ENCODE measurements at regions of chr16 and their contacts with region 1.

Region 1: DNA sequence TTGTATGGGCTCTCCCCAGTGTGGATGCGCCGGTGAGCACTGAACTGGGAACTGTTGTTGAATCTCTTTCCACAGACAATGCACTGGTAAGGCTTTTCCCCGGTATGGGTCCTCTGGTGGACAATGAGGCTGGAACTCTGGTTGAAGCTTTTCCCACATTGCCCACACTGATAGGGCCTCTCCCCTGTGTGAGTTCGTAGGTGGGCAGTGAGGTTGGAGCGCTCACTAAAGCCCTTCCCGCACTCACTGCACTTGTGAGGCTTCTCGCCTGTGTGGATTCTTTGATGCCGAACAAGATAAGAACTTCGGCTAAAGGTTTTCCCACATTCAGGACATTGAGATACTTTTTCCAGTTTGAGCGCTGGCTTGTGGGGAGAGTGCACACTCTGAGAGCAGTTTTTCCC is 17.8 kb downstream of the ZSCAN32 start:
- DNase-seq: no peak
- ATAC-seq: no peak
- H3K4me3 Mint-ChIP-seq: no peak overlapping the region
- H3K27ac Mint-ChIP-seq: no peak overlapping the region
- H3K4me1 Mint-ChIP-seq: no peaks in the 10 kb centered on the region
- H3K27me3 Mint-ChIP-seq: no peaks in the 10 kb centered on the region

Region 2: DNA sequence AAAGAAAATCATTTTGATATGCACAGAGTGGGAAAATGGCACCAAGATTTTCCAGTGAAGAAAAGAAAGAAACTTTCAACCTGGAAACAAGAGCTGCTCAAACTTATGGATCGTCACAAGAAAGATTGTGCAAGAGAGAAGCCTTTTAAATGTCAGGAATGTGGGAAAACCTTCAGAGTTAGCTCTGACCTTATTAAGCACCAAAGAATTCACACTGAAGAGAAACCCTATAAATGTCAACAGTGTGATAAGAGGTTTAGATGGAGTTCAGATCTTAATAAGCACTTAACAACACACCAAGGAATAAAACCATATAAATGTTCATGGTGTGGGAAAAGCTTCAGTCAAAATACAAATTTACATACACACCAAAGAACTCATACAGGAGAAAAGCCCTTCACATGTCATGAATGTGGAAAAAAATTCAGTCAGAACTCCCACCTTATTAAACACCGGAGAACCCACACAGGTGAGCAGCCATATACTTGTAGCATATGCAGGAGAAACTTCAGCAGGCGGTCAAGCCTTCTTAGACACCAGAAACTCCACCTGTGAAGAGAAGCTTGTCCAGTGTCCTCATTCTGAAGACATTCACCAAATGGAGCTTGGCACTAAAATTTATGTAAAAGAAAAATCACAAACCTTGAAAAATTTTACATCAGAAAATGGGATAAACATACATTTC is 65.6 kb before region 1 on chr16:
- CTCF ChIA-PET with region 1: no interaction called
- POLR2A ChIA-PET with region 1: no interaction called
- intact Hi-C with region 1: loop called in 1 of 2 experiments (anchors 5 kb)
- DNase-seq: no peak
- ATAC-seq: no peak
- H3K4me3 Mint-ChIP-seq: no peak overlapping the region
- H3K27ac Mint-ChIP-seq: no peak overlapping the region
- H3K4me1 Mint-ChIP-seq: no peaks in the 10 kb centered on the region
- H3K27me3 Mint-ChIP-seq: no peaks in the 10 kb centered on the region

Region 3: GRCh38 chr16:3408561-3409197 is 25.6 kb after region 1 on chr16:
- CTCF ChIA-PET with region 1: interaction called, 3 read pairs
- POLR2A ChIA-PET with region 1: no interaction called
- intact Hi-C with region 1: loop called in 1 of 2 experiments (anchors 2 kb)
- DNase-seq: no peak
- ATAC-seq: no peak
- H3K4me3 Mint-ChIP-seq: no peak overlapping the region
- H3K27ac Mint-ChIP-seq: no peak overlapping the region
- H3K4me1 Mint-ChIP-seq: peaks cover 6% of the 10 kb centered on the region
- H3K27me3 Mint-ChIP-seq: no peaks in the 10 kb centered on the region